Psoas muscle (tissue), 8 donors: ENCODE measurements at regions of chr10 and their contacts with region 1.

Region 1: GRCh38 chr10:124039483-124040013 is 53.9 kb downstream of the CHST15 start:
- DNase-seq: no peak
- ATAC-seq: no peak
- H3K4me3 ChIP-seq: no peak overlapping the region
- H3K27ac ChIP-seq: no peak overlapping the region
- H3K4me1 ChIP-seq: peaks cover 1% of the 10 kb centered on the region
- H3K27me3 ChIP-seq: peaks cover 0 to 3% (median 0%) of the 10 kb centered on the region in 3 donors
- CTCF ChIP-seq: no peak

Region 2: GRCh38 chr10:123635731-123636130 is 403.8 kb before region 1 on chr10:
- intact Hi-C with region 1: no loop called
- DNase-seq: no peak
- ATAC-seq: no peak
- H3K4me3 ChIP-seq: no peak overlapping the region
- H3K27ac ChIP-seq: no peak overlapping the region
- H3K4me1 ChIP-seq: no peaks in the 10 kb centered on the region
- H3K27me3 ChIP-seq: no peaks in the 10 kb centered on the region
- CTCF ChIP-seq: no peak

Region 3: GRCh38 chr10:124083740-124084397 is 44.3 kb after region 1 on chr10:
- intact Hi-C with region 1: loop called in 1 of 2 experiments (anchors 2 kb)
- DNase-seq: no peak
- ATAC-seq: no peak
- H3K4me3 ChIP-seq: no peak overlapping the region
- H3K27ac ChIP-seq: no peak overlapping the region
- H3K4me1 ChIP-seq: peaks cover 21% of the 10 kb centered on the region
- H3K27me3 ChIP-seq: no peaks in the 10 kb centered on the region
- CTCF ChIP-seq: no peak